ENCODE measurements at regions of chr10 and their contacts with region 1.

Region 1: GRCh38 chr10:33134011-33134751 is 176.2 kb upstream of the ITGB1 start:
- DNase-seq: peak; percentile 21
- ATAC-seq: peak; percentile 84
- H3K4me3 Mint-ChIP-seq: no peak overlapping the region
- H3K27ac Mint-ChIP-seq: peak overlapping the region; percentile 57
- H3K4me1 Mint-ChIP-seq: peaks cover 40% of the 10 kb centered on the region
- H3K27me3 Mint-ChIP-seq: no peaks in the 10 kb centered on the region
- CTCF ChIP-seq: no peak

Region 2: DNA sequence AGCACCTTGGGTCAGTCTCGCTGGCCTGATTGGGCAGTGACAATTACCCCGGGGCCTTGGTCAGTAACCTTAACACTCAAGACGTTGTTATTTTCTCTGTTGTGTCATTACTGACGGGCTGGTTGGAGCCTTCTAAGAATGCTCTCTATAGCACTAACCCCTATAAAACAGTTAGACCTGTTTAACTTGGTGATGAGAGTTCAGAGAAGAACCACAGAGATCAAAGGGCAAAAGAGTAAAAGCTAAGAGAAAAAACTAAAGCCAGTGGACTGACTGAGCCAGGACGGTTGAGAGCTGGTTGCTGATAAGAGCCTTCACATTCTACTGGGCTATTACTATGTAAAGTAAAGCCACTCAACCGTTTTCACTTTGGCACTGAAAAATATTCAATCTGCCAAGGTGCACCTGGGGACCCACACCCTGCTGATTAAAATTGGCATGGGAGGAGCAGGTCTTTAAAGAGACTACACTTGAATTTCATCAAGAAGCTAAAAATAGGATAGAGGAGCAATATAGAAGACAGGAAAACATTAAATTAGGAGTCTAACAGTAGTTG is 162.6 kb before region 1 on chr10:
- CTCF ChIA-PET with region 1: no interaction called
- POLR2A ChIA-PET with region 1: no interaction called
- intact Hi-C with region 1: no loop called
- DNase-seq: no peak
- ATAC-seq: peak; percentile 65
- H3K4me3 Mint-ChIP-seq: peak overlapping the region; percentile 72
- H3K27ac Mint-ChIP-seq: peak overlapping the region; percentile 87
- H3K4me1 Mint-ChIP-seq: peaks cover 36% of the 10 kb centered on the region
- H3K27me3 Mint-ChIP-seq: no peaks in the 10 kb centered on the region
- CTCF ChIP-seq: no peak

Region 3: GRCh38 chr10:33095867-33096815 is 38.0 kb before region 1 on chr10:
- CTCF ChIA-PET with region 1: no interaction called
- POLR2A ChIA-PET with region 1: no interaction called
- intact Hi-C with region 1: loop called (anchors 2 kb)
- DNase-seq: no peak
- ATAC-seq: peak; percentile 66
- H3K4me3 Mint-ChIP-seq: peak overlapping the region; percentile 36
- H3K27ac Mint-ChIP-seq: peak overlapping the region; percentile 72
- H3K4me1 Mint-ChIP-seq: peaks cover 74% of the 10 kb centered on the region
- H3K27me3 Mint-ChIP-seq: no peaks in the 10 kb centered on the region
- CTCF ChIP-seq: no peak

Region 4: GRCh38 chr10:33115738-33116719 is 18.2 kb before region 1 on chr10:
- CTCF ChIA-PET with region 1: interaction called, 4 read pairs
- POLR2A ChIA-PET with region 1: interaction called, 4 read pairs
- intact Hi-C with region 1: loop called (anchors 1 kb)
- DNase-seq: no peak
- ATAC-seq: no peak
- H3K4me3 Mint-ChIP-seq: no peak overlapping the region
- H3K27ac Mint-ChIP-seq: peak overlapping the region; percentile 64
- H3K4me1 Mint-ChIP-seq: peaks cover 88% of the 10 kb centered on the region
- H3K27me3 Mint-ChIP-seq: no peaks in the 10 kb centered on the region
- CTCF ChIP-seq: no peak

Region 5: GRCh38 chr10:33150889-33151288 is 16.7 kb after region 1 on chr10:
- CTCF ChIA-PET with region 1: interaction called, 3 read pairs
- POLR2A ChIA-PET with region 1: interaction called, 11 read pairs
- intact Hi-C with region 1: loop called (anchors 1 kb)
- DNase-seq: no peak
- ATAC-seq: no peak
- H3K4me3 Mint-ChIP-seq: no peak overlapping the region
- H3K27ac Mint-ChIP-seq: peak overlapping the region; percentile 64
- H3K4me1 Mint-ChIP-seq: peaks cover 49% of the 10 kb centered on the region
- H3K27me3 Mint-ChIP-seq: no peaks in the 10 kb centered on the region
- CTCF ChIP-seq: no peak

Region 6: GRCh38 chr10:33155720-33156638 is 21.8 kb after region 1 on chr10:
- CTCF ChIA-PET with region 1: interaction called, 3 read pairs
- POLR2A ChIA-PET with region 1: interaction called, 11 read pairs
- intact Hi-C with region 1: loop called (anchors 1 kb)
- DNase-seq: no peak
- ATAC-seq: peak; percentile 65
- H3K4me3 Mint-ChIP-seq: no peak overlapping the region
- H3K27ac Mint-ChIP-seq: no peak overlapping the region
- H3K4me1 Mint-ChIP-seq: peaks cover 41% of the 10 kb centered on the region
- H3K27me3 Mint-ChIP-seq: peaks cover 2% of the 10 kb centered on the region
- CTCF ChIP-seq: no peak

Region 7: DNA sequence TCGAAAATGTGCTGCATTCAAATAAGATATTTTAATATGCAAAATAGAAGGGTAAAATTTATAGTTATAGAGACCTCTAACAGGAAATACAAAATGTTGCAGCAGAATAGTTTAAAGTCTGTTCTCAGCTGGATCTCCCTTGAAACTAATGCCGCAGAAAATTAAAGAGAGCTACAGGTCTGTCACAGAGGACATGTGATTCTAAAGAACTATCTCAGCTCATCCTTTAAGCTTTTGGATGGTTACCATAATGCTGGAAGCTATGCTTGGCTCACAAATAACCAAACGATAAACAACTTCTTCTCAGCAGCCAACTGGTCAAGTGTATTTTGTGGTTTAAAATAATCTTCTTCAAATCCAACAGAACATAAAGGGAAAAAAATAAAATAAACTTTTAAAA is 1327.9 kb after region 1 on chr10:
- CTCF ChIA-PET with region 1: no interaction called
- POLR2A ChIA-PET with region 1: interaction called, 14 read pairs
- intact Hi-C with region 1: no loop called
- DNase-seq: no peak
- ATAC-seq: no peak
- H3K4me3 Mint-ChIP-seq: no peak overlapping the region
- H3K27ac Mint-ChIP-seq: no peak overlapping the region
- H3K4me1 Mint-ChIP-seq: no peaks in the 10 kb centered on the region
- H3K27me3 Mint-ChIP-seq: no peaks in the 10 kb centered on the region
- CTCF ChIP-seq: no peak

Measured in activated B cell treated with CpG ODN at 0.5 μM for 24 hours (primary cell).